Activated naive CD8-positive, alpha-beta T cell treated with anti-CD3 and anti-CD28 coated beads, Interleukin-2, amount 10 ng/mL, durations not matched to agents 7 days and 5 days (primary cell): ENCODE measurements at regions of chr3 and their contacts with region 1.

Region 1: DNA sequence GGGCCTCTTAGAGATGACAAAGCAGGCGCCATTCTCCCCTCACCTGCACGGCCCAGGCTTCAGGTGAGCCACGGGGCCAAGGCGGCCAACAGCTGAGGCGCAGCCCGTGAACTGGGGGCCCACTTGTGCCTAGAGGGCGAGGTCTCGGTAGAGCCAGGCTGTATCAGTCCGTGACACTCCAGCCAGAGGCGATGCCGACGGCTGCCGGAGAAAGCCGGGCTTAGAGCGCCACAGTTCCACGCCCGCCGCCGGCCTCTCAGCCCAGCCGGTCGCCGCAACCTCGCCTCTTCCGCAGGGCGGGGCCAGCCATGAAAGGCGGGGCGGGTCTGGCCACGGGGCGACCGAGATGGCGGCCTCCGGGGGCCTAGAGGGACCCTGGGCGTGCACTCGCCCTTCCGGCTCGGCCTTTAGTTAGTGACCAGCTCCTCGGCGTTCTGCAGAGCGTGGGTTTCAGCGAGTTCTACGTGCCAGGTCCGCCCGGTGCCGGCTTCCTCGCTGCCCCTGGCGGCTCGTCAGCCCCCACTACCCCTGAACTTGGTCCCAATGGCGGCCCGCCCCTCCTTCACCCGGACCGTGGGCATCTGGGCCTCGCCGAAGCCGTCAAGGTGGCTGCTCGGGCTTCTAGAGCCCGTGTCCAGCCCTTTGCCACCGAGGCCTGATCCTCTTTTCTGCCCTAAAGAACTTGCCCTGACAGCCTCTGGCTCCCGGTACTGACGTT is at the start of gene ZNF621:
- DNase-seq: peak; percentile 92
- ATAC-seq: peak; percentile 95
- H3K4me3 Mint-ChIP-seq: peak within 1 kb of the TSS; percentile 92
- H3K27ac Mint-ChIP-seq: peak within 1 kb of the TSS; percentile 97
- H3K4me1 Mint-ChIP-seq: peaks cover 32% of the 10 kb centered on the region
- H3K27me3 Mint-ChIP-seq: no peaks in the 10 kb centered on the region
- total RNA-seq, gene ZNF621: 26.9 to 28.3 TPM

Region 2: GRCh38 chr3:40452876-40453730 is 71.6 kb before region 1 on chr3:
- POLR2A ChIA-PET with region 1: interaction called, 25 read pairs
- DNase-seq: peak; percentile 88
- ATAC-seq: peak; percentile 92
- H3K4me3 Mint-ChIP-seq: peak overlapping the region; percentile 86
- H3K27ac Mint-ChIP-seq: peak overlapping the region; percentile 98
- H3K4me1 Mint-ChIP-seq: peaks cover 27% of the 10 kb centered on the region
- H3K27me3 Mint-ChIP-seq: no peaks in the 10 kb centered on the region

Region 3: GRCh38 chr3:40476478-40477470 is 48.0 kb before region 1 on chr3 and contains the start of gene ZNF619:
- POLR2A ChIA-PET with region 1: interaction called, 12 read pairs
- DNase-seq: peak; percentile 67
- ATAC-seq: peak; percentile 89
- H3K4me3 Mint-ChIP-seq: peak within 1 kb of the TSS; percentile 86
- H3K27ac Mint-ChIP-seq: peak within 1 kb of the TSS; percentile 85
- H3K4me1 Mint-ChIP-seq: peaks cover 23% of the 10 kb centered on the region
- H3K27me3 Mint-ChIP-seq: no peaks in the 10 kb centered on the region
- total RNA-seq, gene ZNF619: 11.3 to 13.3 TPM

Region 4: DNA sequence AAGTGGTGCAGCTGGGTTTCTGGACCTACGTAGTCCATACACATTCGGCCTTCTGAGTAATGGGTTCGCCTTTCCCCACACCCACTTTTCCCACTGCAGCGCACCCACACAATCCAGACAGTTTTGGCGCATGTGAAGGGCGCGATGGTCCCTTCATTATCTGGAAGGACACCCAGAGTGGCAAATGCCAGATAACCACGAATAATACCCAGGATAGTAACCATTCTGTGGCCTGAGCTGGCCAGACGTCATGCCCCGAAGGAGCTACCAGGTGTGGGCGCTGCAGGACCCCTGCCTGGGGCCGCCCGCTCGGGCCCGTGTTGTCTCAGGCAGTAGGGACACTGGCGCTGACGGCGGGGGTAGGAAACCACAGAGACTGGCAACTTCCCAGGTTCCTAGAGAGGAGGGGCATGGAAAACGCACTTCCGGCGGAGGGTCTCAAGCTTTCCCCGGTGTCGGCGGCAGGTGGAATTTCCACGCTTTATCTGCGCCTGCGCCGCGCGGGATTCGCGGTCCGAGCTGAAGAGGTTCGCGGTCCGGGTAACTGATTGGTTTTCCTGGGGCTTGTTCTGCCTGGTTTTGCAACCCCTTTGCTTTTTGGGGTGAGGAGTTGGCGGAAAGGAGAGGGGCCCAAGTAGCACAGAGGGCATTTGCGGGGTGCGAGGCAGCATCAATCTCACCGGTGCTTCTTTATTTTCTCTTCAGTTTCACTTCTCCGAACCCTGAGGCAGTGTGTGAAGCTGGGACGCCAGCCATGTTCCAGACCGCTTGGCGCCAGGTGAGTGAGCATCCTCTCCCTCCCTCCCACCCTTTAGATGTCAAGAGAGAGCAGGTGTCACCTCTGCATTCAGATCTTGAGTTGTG is 18.9 kb before region 1 on chr3 and contains the start of gene ZNF620:
- POLR2A ChIA-PET with region 1: interaction called, 10 read pairs
- DNase-seq: peak; percentile 66
- ATAC-seq: peak; percentile 85
- H3K4me3 Mint-ChIP-seq: peak within 1 kb of the TSS; percentile 92
- H3K27ac Mint-ChIP-seq: peak within 1 kb of the TSS; percentile 93
- H3K4me1 Mint-ChIP-seq: peaks cover 18% of the 10 kb centered on the region
- H3K27me3 Mint-ChIP-seq: peaks cover 8% of the 10 kb centered on the region
- total RNA-seq, gene ZNF620: 4.5 to 7.2 TPM

Region 5: GRCh38 chr3:41198950-41199865 is 674.5 kb after region 1 on chr3 and contains the start of gene CTNNB1:
- POLR2A ChIA-PET with region 1: interaction called, 14 read pairs
- DNase-seq: peak; percentile 93
- ATAC-seq: peak; percentile 84
- H3K4me3 Mint-ChIP-seq: peak within 1 kb of the TSS; percentile 95
- H3K27ac Mint-ChIP-seq: peak within 1 kb of the TSS; percentile 97
- H3K4me1 Mint-ChIP-seq: peaks cover 19% of the 10 kb centered on the region
- H3K27me3 Mint-ChIP-seq: peaks cover 26% of the 10 kb centered on the region
- total RNA-seq, gene CTNNB1: 135 to 139 TPM